Activated T-helper 1 cell treated with anti-CD3 and anti-CD28 coated beads, Interleukin-12 subunit alpha, Interleukin-12 subunit beta, Interleukin-2, Interleukin-4 antibody, amounts not matched to agents 30 ng/mL and 10 ng/mL and 1 ng/mL, durations not matched to agents 14 hours and 24 hours and 36 hours (primary cell): ENCODE measurements at regions of chr4 and their contacts with region 1.

Region 1: DNA sequence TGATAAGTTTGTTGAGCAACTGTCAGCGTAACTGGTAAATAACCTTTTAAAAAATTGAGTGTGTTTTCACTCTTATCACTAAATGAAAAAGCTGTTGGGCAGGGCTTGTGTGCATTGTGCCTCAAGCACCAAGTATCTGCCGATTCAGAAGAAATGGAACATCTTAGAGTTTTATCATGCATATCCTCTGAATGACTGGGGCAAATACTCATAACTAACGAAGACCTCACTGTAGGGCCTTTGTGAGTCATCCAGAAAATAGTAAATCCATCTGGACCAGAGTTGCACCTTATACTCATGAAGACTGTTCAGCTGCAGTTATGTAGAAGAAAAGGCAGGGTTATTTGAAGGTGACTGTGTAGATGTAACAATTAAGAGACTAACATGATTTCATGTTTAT is 222.1 kb downstream of the CAMK2D start:
- DNase-seq: no peak
- H3K4me3 Mint-ChIP-seq: peak overlapping the region; percentile 29
- H3K27ac Mint-ChIP-seq: peak overlapping the region; percentile 80
- H3K4me1 Mint-ChIP-seq: peaks cover 39% of the 10 kb centered on the region
- H3K27me3 Mint-ChIP-seq: no peaks in the 10 kb centered on the region

Region 2: DNA sequence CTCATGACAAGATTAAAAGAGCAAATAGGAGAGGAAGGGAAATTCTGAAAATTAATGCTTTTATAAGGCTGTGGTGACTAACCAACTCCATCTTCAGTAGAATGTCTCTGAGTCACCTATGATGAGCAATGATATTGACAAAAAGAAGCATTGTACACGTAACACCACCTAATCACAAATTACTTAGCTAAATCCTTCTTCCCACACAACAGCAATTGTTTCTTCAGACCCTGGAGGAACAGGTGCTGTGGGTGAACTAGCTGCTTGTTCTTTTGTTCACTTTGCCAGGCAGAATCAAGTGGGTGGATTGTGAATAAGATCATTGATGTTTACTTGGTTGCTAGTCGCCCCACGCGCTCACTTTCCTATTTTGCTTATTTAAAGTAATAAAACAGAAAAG is 93.4 kb before region 1 on chr4:
- intact Hi-C with region 1: loop called (anchors 1 kb)
- DNase-seq: no peak
- H3K4me3 Mint-ChIP-seq: no peak overlapping the region
- H3K27ac Mint-ChIP-seq: peak overlapping the region; percentile 54
- H3K4me1 Mint-ChIP-seq: peaks cover 24% of the 10 kb centered on the region
- H3K27me3 Mint-ChIP-seq: no peaks in the 10 kb centered on the region

Region 3: GRCh38 chr4:113524096-113524495 is 15.3 kb before region 1 on chr4:
- intact Hi-C with region 1: loop called (anchors 1 kb)
- DNase-seq: no peak
- H3K4me3 Mint-ChIP-seq: peak overlapping the region; percentile 3
- H3K27ac Mint-ChIP-seq: peak overlapping the region; percentile 31
- H3K4me1 Mint-ChIP-seq: peaks cover 15% of the 10 kb centered on the region
- H3K27me3 Mint-ChIP-seq: no peaks in the 10 kb centered on the region

Region 4: DNA sequence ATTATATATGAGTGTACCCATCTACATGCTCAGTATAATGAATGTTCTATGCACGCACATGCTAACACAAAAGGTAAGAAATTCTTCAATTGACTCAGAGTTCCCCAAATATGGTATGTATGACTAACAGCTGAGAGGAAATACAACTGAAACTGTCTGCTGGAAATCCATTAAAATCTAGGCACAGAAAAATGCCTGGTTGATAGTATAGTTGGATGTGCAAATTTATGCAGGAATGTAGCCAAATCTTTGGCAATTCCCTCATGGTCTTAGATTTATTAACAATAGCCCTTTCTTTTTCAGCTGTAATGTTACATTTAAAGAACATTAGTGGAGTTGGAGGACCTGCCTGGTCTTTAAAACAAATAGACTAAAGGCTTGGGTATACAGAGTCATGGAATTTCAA is 216.6 kb after region 1 on chr4:
- intact Hi-C with region 1: loop called (anchors 1 kb)
- DNase-seq: no peak
- H3K4me3 Mint-ChIP-seq: peak overlapping the region; percentile 100
- H3K27ac Mint-ChIP-seq: peak overlapping the region; percentile 73
- H3K4me1 Mint-ChIP-seq: peaks cover 61% of the 10 kb centered on the region
- H3K27me3 Mint-ChIP-seq: no peaks in the 10 kb centered on the region

Region 5: GRCh38 chr4:113837397-113837796 is 298.0 kb after region 1 on chr4:
- intact Hi-C with region 1: no loop called
- DNase-seq: no peak
- H3K4me3 Mint-ChIP-seq: no peak overlapping the region
- H3K27ac Mint-ChIP-seq: no peak overlapping the region
- H3K4me1 Mint-ChIP-seq: no peaks in the 10 kb centered on the region
- H3K27me3 Mint-ChIP-seq: peaks cover 2% of the 10 kb centered on the region

Region 6: GRCh38 chr4:113869743-113870375 is 330.5 kb after region 1 on chr4:
- intact Hi-C with region 1: loop called (anchors 2 kb)
- DNase-seq: peak; percentile 2
- H3K4me3 Mint-ChIP-seq: peak overlapping the region; percentile 53
- H3K27ac Mint-ChIP-seq: peak overlapping the region; percentile 88
- H3K4me1 Mint-ChIP-seq: peaks cover 16% of the 10 kb centered on the region
- H3K27me3 Mint-ChIP-seq: no peaks in the 10 kb centered on the region